Right ventricle myocardium inferior (tissue), 1 donor: ENCODE measurements at regions of chr10 and their contacts with region 1.

Region 1: DNA sequence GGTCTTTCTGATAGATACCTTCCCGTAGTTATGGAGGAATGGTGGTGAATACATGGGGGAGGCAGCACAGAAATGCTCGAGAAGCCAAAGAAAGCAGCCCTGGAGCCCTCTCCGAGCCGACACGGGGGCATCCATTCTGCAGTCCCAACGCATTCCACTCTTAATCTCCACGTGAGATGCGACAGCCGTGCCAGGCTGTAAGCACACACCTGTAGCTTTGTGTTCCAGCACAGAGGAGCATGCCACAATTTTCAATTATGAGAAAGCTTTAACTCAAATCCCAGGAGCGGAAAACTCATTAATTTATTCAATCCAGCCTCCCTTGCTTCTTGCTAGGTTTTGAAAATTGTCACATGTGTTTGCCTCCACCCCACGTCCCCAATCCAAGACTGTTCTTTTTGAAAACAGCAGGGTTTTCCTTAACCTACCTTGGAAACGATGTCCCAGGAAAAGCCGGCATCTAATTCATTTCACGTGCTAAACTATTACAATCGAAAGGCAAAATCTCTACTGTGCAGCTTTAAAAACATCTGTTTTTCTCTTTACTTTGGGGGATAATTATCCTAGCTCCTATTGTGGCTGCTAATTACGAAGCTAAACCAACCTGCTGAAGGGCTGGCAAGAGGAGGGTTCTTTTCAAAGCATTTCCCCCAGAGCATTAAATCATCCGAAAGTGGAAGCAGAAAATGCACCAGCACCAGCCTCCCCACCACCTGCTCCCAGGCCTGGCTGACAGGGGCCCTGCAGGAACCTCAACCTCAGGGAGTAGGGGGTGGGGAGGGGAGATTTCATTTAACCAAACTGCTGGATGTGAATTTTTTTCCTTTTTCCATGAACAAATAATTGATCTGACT is 56.0 kb upstream of the CHST15 start:
- DNase-seq: no peak
- ATAC-seq: no peak

Region 2: DNA sequence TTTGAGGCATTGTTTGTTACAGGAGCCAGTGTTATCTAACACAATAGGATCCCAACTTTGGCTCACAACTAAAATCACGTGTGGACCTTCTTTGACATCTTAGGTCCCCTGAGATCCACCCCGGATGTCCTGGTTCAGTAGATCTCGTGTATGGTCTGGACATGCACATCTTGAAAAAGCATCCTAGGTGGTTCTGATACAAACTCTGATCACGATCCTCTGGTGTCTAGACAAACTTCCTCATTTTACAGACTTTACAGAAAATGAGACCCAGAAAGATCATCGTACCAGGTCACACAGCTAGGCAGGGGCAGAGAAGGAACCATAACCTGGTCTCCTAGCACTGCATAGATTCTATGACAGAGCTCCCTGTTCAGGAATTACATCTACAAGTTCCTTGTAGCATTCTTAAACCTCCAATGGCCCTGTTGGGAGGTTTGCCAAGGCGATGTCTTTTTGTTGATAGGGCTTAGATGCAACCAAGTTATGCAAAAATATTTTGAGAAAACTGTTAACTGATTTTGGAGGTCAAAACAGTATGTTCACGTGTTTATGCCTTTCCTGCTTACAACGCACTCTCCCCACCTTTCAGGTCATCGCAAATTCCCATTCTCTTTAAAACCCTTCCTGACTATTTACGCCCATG is 25.2 kb before region 1 on chr10:
- intact Hi-C with region 1: loop called (anchors 1 kb)
- DNase-seq: no peak
- ATAC-seq: no peak

Region 3: GRCh38 chr10:124378881-124379471 is 229.6 kb after region 1 on chr10:
- intact Hi-C with region 1: no loop called
- DNase-seq: peak; percentile 9
- ATAC-seq: no peak